ENCODE measurements at regions of chr7 and their contacts with region 1.

Region 1: GRCh38 chr7:129298268-129298893 is 73.6 kb downstream of the AHCYL2 start:
- DNase-seq: peak; percentile 65
- H3K4me3 ChIP-seq: no peak overlapping the region; a peak in 1 of 4 replicates
- H3K27ac ChIP-seq: no peak overlapping the region
- H3K4me1 ChIP-seq: no peaks in the 10 kb centered on the region
- H3K27me3 ChIP-seq: no peaks in the 10 kb centered on the region
- CTCF ChIP-seq: peak; percentile 98
- EP300 ChIP-seq: no peak
- RAD21 ChIP-seq: peak; percentile 90

Region 2: DNA sequence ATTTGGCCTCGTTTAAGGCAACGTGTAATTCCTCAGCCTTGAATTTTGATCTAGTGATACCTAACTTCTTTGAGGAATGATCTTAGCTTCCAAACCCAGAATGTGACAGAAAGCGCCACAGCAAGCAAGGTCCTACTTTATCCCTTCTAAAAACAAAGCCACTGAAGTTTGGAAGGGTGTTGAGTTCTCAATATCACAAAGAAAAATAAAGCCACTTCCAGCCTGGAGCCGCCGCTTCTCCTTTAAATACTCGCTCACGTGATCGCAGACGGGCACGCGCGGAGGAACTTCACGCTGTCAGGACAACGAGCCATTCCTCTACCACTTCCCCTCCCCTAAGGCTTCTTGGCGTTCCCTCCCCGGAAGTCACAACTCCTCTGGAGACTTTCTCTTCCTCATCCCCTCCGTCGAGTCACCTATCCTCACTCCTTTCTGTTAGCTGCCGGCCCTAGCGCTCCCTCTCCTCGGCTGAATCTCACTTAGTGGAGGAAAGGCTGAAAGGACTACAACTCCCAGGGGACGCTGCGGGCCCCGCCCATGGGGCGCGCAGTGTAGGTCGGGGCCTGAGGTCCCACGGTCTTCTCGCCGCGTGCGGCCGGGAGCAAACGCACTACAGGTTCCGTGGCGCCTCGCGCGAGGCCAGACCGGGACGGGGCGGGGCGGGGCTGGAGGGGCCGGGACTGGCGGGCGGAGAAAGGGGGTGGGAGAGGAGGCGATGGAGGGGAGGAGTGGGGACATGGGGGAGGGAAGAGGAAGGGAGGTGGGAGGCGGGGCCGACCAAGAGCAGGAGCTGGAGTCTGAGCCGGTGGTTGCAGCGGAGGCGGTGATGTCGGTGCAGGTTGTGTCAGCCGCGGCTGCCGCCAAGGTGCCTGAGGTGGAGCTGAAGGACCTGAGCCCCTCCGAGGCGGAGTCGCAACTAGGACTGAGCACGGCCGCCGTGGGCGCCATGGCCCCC is 73.9 kb before region 1 on chr7 and contains the start of gene AHCYL2:
- CTCF ChIA-PET with region 1: interaction called, 363 read pairs
- POLR2A ChIA-PET with region 1: no interaction called
- DNase-seq: peak; percentile 99
- H3K4me3 ChIP-seq: peak within 1 kb of the TSS; percentile 68 to 76
- H3K27ac ChIP-seq: peak within 1 kb of the TSS; percentile 95
- H3K4me1 ChIP-seq: peaks cover 0 to 6% of the 10 kb centered on the region in 2 experiments; a peak in 3 of 4 replicates
- H3K27me3 ChIP-seq: no peaks in the 10 kb centered on the region
- CTCF ChIP-seq: no peak
- EP300 ChIP-seq: no peak; a peak in 1 of 4 replicates
- RAD21 ChIP-seq: no peak
- polyA plus RNA-seq, gene AHCYL2: 20.4 and 29.9 TPM in 2 replicates

Region 3: DNA sequence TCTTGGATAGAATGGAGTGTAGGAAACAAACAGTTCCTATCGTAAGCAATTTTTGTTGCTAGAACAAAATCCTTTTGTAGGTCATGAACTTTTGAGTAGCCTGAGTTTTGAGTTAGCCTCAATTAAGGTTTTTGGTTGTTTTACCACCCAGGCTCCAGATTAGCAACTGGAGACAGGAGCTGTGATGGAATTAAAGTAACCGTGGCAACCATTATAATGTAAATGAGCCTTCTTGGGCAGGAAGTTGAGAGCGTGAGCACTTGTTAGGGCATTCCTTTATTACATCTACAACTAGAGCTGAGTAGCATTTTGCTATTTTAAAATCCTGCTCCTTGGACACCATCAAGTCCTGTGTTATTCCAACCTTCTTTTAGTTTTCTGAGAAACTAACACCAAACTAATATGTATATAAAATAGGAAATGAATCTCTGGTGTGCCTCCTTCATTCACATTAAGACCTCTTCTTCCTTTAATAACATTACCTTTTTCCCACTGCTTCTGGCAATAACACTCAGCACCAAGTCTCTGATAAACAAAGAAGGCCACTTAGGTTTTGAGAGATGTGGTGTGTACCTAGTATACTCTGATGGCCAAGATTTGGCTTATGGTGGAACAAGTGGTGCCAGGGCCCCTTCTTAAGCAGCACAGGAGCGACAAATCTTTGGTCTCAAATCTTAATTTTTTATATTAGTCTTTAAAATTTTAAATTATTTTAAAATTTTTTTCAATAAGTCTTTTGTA is 39.6 kb before region 1 on chr7:
- CTCF ChIA-PET with region 1: interaction called, 19 read pairs
- POLR2A ChIA-PET with region 1: no interaction called
- DNase-seq: no peak
- H3K4me3 ChIP-seq: no peak overlapping the region
- H3K27ac ChIP-seq: no peak overlapping the region
- H3K4me1 ChIP-seq: no peaks in the 10 kb centered on the region
- H3K27me3 ChIP-seq: no peaks in the 10 kb centered on the region
- CTCF ChIP-seq: no peak
- EP300 ChIP-seq: no peak
- RAD21 ChIP-seq: no peak

Region 4: GRCh38 chr7:129285111-129285510 is 13.3 kb before region 1 on chr7:
- CTCF ChIA-PET with region 1: interaction called, 78 read pairs
- POLR2A ChIA-PET with region 1: no interaction called
- DNase-seq: no peak
- H3K4me3 ChIP-seq: no peak overlapping the region
- H3K27ac ChIP-seq: no peak overlapping the region
- H3K4me1 ChIP-seq: peaks cover 0 to 6% of the 10 kb centered on the region in 2 experiments; a peak in 1 of 4 replicates
- H3K27me3 ChIP-seq: no peaks in the 10 kb centered on the region
- CTCF ChIP-seq: no peak
- EP300 ChIP-seq: no peak
- RAD21 ChIP-seq: no peak

Region 5: GRCh38 chr7:129343099-129343700 is 44.8 kb after region 1 on chr7:
- CTCF ChIA-PET with region 1: interaction called, 13 read pairs
- POLR2A ChIA-PET with region 1: no interaction called
- DNase-seq: peak; percentile 64
- H3K4me3 ChIP-seq: no peak overlapping the region
- H3K27ac ChIP-seq: no peak overlapping the region
- H3K4me1 ChIP-seq: peaks cover 0 to 6% of the 10 kb centered on the region in 2 experiments; a peak in 1 of 4 replicates
- H3K27me3 ChIP-seq: no peaks in the 10 kb centered on the region
- CTCF ChIP-seq: peak; percentile 98
- EP300 ChIP-seq: no peak
- RAD21 ChIP-seq: peak; percentile 81